PC-3 (cell line): ENCODE measurements at regions of chr11 and their contacts with region 1.

Region 1: GRCh38 chr11:69642913-69643632 is 2.1 kb downstream of the CCND1 start:
- DNase-seq: peak; percentile 85
- ATAC-seq: peak; percentile 6
- H3K4me3 ChIP-seq: peak overlapping the region; percentile 99
- H3K27ac ChIP-seq: peak overlapping the region; percentile 84
- H3K4me1 ChIP-seq: peaks cover 39% of the 10 kb centered on the region
- H3K27me3 ChIP-seq: no peaks in the 10 kb centered on the region
- CTCF ChIP-seq: peak; percentile 90

Region 2: GRCh38 chr11:69101115-69101791 is 541.8 kb before region 1 on chr11:
- CTCF ChIA-PET with region 1: interaction called, 3 read pairs
- POLR2A ChIA-PET with region 1: no interaction called
- intact Hi-C with region 1: loop called (anchors 1 kb)
- DNase-seq: peak; percentile 95
- ATAC-seq: peak; percentile 84
- H3K4me3 ChIP-seq: no peak overlapping the region
- H3K27ac ChIP-seq: no peak overlapping the region
- H3K4me1 ChIP-seq: peaks cover 17% of the 10 kb centered on the region
- H3K27me3 ChIP-seq: no peaks in the 10 kb centered on the region
- CTCF ChIP-seq: peak; percentile 98

Region 3: GRCh38 chr11:69122642-69123431 is 520.2 kb before region 1 on chr11:
- CTCF ChIA-PET with region 1: no interaction called
- POLR2A ChIA-PET with region 1: interaction called, 4 read pairs
- intact Hi-C with region 1: loop called (anchors 1 kb)
- DNase-seq: peak; percentile 100
- ATAC-seq: peak; percentile 94
- H3K4me3 ChIP-seq: peak overlapping the region; percentile 41
- H3K27ac ChIP-seq: peak overlapping the region; percentile 97
- H3K4me1 ChIP-seq: peaks cover 32% of the 10 kb centered on the region
- H3K27me3 ChIP-seq: no peaks in the 10 kb centered on the region
- CTCF ChIP-seq: no peak

Region 4: GRCh38 chr11:69368119-69368881 is 274.8 kb before region 1 on chr11:
- CTCF ChIA-PET with region 1: no interaction called
- POLR2A ChIA-PET with region 1: no interaction called
- intact Hi-C with region 1: loop called (anchors 5 kb)
- DNase-seq: peak; percentile 82
- ATAC-seq: peak; percentile 85
- H3K4me3 ChIP-seq: peak overlapping the region; percentile 18
- H3K27ac ChIP-seq: peak overlapping the region; percentile 88
- H3K4me1 ChIP-seq: peaks cover 36% of the 10 kb centered on the region
- H3K27me3 ChIP-seq: no peaks in the 10 kb centered on the region
- CTCF ChIP-seq: no peak

Region 5: DNA sequence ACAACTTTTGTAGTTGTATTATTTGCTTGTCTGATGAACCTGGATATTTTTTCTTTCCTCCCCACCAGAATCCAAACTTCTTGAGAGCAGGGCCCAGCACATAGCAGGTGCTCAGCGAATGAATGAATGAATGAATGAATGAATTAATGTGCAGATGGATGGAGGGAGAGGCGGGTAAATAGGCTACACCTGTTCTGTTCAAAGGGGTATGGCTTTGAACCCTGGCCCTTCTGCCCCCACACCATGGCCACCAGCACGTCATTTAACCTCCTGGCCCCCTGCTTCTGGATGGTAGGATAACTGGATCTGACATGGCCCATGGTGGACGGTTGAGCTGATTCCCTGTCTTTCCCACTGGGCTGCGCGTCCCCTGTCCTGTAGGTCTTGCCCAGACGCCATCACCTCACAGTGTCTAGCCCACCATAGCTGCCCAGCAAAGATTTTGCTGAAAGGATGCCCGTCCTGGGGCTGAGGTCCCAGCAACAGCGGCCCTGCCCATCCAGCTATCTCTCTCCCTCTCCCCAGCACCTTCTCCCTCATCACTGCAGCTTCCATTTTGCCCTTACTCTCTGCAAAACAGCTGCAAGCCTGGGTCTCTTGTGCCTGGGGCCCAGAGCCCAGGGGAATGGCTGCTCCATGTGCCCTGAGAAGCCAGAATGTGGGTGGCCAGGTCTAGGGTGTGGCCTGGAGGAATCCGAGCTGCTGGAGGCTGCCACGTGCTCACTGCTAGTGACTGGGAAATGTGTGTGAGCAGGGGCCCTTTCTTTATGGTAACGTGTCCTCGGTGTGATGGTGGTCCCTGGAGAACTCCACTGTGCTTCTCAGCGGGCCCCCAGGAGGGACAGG is 211.0 kb before region 1 on chr11:
- CTCF ChIA-PET with region 1: interaction called, 10 read pairs
- POLR2A ChIA-PET with region 1: no interaction called
- intact Hi-C with region 1: no loop called
- DNase-seq: no peak
- ATAC-seq: no peak
- H3K4me3 ChIP-seq: no peak overlapping the region
- H3K27ac ChIP-seq: no peak overlapping the region
- H3K4me1 ChIP-seq: peaks cover 7% of the 10 kb centered on the region
- H3K27me3 ChIP-seq: no peaks in the 10 kb centered on the region
- CTCF ChIP-seq: no peak

Region 6: DNA sequence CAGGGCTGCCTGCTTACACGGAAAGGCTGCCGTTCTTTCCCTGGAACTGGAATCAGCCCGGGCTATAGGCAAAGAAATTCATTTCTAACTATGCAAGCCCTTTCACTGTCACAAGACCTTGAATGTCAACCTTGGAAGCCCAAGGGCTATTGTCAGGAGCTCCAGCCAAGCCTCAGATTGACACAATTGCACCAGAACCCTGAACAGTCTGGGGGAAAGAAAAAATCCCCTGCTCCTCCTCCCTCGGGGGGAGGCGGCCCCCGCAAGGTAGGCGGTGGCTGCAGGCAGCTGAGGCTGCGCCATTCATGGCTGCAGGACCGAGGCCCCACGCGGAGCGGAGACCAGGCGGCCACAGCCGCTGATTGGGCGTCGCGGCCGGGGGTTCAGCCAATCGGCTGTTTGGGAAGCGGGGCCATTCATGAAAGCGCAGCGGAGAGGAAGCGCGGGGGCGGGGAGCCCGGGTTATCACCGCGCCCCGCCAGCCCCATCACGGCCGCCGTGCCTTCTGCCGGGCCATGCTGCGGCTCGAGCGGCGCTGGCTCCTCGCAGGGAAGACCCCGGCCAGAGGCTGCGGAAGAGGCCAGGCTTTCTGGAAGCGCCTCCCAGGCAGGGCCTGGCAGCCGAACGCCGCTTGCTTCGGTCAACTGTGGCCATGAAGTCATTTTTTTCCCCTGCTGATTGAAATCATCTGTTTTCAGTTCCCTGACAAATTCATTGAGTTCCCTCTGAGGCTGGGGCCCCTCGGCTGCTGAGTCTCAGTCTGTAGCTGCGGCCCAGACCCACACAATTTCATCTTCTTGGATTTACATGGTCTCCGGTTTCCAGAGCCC is 199.7 kb before region 1 on chr11:
- CTCF ChIA-PET with region 1: no interaction called
- POLR2A ChIA-PET with region 1: interaction called, 6 read pairs
- intact Hi-C with region 1: loop called (anchors 2 kb)
- DNase-seq: peak; percentile 96
- ATAC-seq: peak; percentile 87
- H3K4me3 ChIP-seq: peak overlapping the region; percentile 48
- H3K27ac ChIP-seq: peak overlapping the region; percentile 86
- H3K4me1 ChIP-seq: peaks cover 39% of the 10 kb centered on the region
- H3K27me3 ChIP-seq: no peaks in the 10 kb centered on the region
- CTCF ChIP-seq: no peak